ENCODE measurements at regions of chr5 and their contacts with region 1.

Region 1: GRCh38 chr5:115016646-115017045 is 153.1 kb downstream of the TRIM36 start:
- DNase-seq: no peak
- H3K4me3 ChIP-seq: no peak overlapping the region
- H3K4me3 Mint-ChIP-seq: no peak overlapping the region
- H3K27ac Mint-ChIP-seq: no peak overlapping the region
- H3K4me1 ChIP-seq: no peaks in the 10 kb centered on the region
- H3K4me1 Mint-ChIP-seq: no peaks in the 10 kb centered on the region
- H3K27me3 ChIP-seq: no peaks in the 10 kb centered on the region
- H3K27me3 Mint-ChIP-seq: no peaks in the 10 kb centered on the region
- CTCF ChIP-seq: no peak

Region 2: DNA sequence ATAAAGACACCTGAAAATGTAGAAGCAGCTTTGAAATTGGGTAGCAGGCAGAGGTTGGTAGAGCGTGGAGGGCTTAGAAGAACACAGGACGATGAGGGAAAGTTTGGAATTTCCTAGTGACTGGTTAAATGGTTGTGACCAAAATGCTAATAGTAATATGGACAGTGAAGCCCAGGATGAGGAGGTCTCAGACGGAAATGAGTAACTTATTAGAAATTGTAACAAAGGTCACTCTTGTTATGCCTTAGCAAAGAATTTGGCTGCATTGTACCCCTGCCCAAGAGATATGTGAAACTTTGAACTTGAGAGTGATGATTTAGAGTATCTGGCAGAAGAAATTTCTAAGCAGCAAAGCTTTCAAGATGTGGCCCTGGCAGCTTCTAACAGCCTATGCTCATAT is 272.2 kb before region 1 on chr5:
- CTCF ChIA-PET with region 1: no interaction called
- POLR2A ChIA-PET with region 1: no interaction called
- intact Hi-C with region 1: no loop called
- DNase-seq: no peak
- H3K4me3 ChIP-seq: no peak overlapping the region
- H3K4me3 Mint-ChIP-seq: no peak overlapping the region
- H3K27ac Mint-ChIP-seq: no peak overlapping the region
- H3K4me1 ChIP-seq: no peaks in the 10 kb centered on the region
- H3K4me1 Mint-ChIP-seq: peaks cover 6% of the 10 kb centered on the region
- H3K27me3 ChIP-seq: no peaks in the 10 kb centered on the region
- H3K27me3 Mint-ChIP-seq: no peaks in the 10 kb centered on the region
- CTCF ChIP-seq: no peak

Region 3: GRCh38 chr5:114953565-114953964 is 63.1 kb before region 1 on chr5:
- CTCF ChIA-PET with region 1: no interaction called
- POLR2A ChIA-PET with region 1: no interaction called
- intact Hi-C with region 1: loop called (anchors 5 kb)
- DNase-seq: no peak
- H3K4me3 ChIP-seq: no peak overlapping the region
- H3K4me3 Mint-ChIP-seq: no peak overlapping the region
- H3K27ac Mint-ChIP-seq: no peak overlapping the region
- H3K4me1 ChIP-seq: no peaks in the 10 kb centered on the region
- H3K4me1 Mint-ChIP-seq: no peaks in the 10 kb centered on the region
- H3K27me3 ChIP-seq: no peaks in the 10 kb centered on the region
- H3K27me3 Mint-ChIP-seq: no peaks in the 10 kb centered on the region
- CTCF ChIP-seq: no peak

Region 4: DNA sequence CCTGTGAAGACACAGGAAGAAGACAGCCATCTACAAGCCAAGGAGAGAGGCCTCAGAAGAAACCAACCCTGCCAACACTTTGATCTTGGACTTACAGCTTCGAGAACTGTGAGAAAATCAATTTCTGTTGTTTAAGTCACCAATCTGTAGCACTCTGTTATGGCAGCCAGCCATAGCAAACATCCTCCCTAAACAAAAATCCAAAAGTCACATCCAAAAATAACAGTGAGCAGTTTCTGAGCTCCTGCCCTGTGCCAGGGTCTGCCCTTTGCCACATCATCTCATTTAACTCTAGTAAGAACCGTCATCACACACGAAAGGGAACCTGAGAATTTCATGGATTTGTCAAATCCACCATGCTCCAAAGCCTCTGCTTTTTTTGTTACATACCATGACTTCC is 34.2 kb after region 1 on chr5:
- CTCF ChIA-PET with region 1: no interaction called
- POLR2A ChIA-PET with region 1: no interaction called
- intact Hi-C with region 1: no loop called
- DNase-seq: no peak
- H3K4me3 ChIP-seq: no peak overlapping the region
- H3K4me3 Mint-ChIP-seq: no peak overlapping the region
- H3K27ac Mint-ChIP-seq: no peak overlapping the region
- H3K4me1 ChIP-seq: no peaks in the 10 kb centered on the region
- H3K4me1 Mint-ChIP-seq: no peaks in the 10 kb centered on the region
- H3K27me3 ChIP-seq: no peaks in the 10 kb centered on the region
- H3K27me3 Mint-ChIP-seq: peaks cover 6% of the 10 kb centered on the region
- CTCF ChIP-seq: no peak